ENCODE measurements at regions of chr5 and their contacts with region 1.

Region 1: DNA sequence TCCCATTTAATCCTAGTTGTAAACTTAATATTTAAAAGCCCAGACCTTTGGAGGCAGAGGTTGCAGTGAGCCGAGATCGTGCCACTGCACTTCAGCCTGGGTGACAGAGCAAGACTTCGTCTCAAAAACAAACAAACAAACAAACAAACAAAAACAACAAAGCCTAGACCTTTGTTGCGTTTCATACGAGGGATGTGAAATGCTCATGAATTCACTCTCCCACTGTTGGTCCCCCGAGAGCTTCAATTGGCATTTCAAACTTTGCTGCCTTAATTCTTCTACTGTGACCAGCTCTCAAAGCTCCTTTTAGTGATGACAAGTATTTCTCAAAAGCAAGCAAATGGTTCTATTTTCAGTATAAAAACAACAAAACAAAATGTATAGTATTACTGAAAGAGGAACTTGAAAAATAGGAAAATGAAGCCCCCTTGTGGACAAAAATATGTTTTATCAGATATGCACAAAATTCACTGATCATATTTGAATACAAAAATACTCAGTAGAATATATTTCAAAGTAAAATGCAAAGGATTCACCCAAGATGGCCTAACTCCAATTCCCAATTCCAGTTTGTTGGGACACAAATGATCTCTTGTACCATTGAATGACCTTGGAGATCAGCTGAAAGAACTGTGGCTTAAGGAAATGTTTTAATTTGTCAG is 140.4 kb downstream of the ESM1 start:
- DNase-seq: no peak
- H3K4me3 Mint-ChIP-seq: no peak overlapping the region
- H3K27ac Mint-ChIP-seq: no peak overlapping the region
- H3K4me1 Mint-ChIP-seq: peaks cover 3% of the 10 kb centered on the region
- H3K27me3 Mint-ChIP-seq: peaks cover 7% of the 10 kb centered on the region

Region 2: GRCh38 chr5:54363669-54364068 is 481.4 kb before region 1 on chr5:
- CTCF ChIA-PET with region 1: no interaction called
- intact Hi-C with region 1: no loop called
- DNase-seq: no peak
- H3K4me3 Mint-ChIP-seq: no peak overlapping the region
- H3K27ac Mint-ChIP-seq: no peak overlapping the region
- H3K4me1 Mint-ChIP-seq: no peaks in the 10 kb centered on the region
- H3K27me3 Mint-ChIP-seq: peaks cover 20% of the 10 kb centered on the region

Region 3: DNA sequence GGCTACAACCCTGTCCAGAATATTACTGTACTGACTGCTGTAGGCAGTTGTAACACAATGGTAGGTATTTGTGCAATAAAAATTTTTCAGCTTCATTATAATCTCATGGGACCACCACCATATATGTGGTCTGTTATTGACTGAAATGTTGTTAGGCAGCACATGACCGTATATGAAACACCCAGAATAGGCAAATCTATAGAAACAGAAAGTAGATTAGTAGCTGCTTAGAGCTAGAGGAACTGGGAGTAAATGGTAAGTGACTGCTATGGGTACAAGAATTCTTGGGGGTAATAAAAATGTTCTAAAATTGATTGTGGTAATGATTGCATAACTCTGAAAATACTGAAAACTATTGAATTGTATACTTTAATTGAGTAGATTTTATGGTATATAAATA is 45.4 kb before region 1 on chr5:
- CTCF ChIA-PET with region 1: no interaction called
- intact Hi-C with region 1: no loop called
- DNase-seq: no peak
- H3K4me3 Mint-ChIP-seq: no peak overlapping the region
- H3K27ac Mint-ChIP-seq: no peak overlapping the region
- H3K4me1 Mint-ChIP-seq: peaks cover 7% of the 10 kb centered on the region
- H3K27me3 Mint-ChIP-seq: peaks cover 5% of the 10 kb centered on the region

Region 4: DNA sequence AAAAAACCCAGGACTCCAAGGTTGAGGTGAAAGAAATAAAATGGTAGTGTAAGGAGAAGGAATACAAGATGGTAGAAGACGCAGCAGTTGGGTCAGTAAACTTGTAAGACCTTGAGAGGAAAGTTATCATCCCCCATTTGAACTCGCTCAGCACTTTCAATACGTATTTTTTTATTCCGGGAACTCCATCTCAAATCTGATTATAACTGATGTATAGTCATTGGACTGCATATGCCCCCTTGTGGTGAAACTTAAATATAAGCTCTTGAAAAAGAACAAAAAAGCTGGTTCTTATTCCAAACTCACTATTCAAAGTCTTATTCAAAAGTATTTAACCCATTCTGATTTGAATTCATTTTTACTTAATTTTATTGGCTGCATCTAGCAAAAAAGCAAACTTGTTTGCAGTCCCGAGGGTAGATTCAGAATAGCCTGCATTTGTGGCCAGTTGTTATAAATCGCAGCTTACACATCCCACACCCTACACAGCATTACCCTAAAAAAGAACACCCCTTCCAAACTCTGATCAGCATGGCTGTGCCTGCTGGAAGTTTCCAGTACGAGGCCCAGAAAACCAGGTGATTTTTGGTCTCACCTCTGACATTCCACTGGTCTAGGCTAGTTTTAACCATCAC is 22.4 kb after region 1 on chr5:
- CTCF ChIA-PET with region 1: interaction called, 12 read pairs
- intact Hi-C with region 1: loop called (anchors 1 kb)
- DNase-seq: no peak
- H3K4me3 Mint-ChIP-seq: no peak overlapping the region
- H3K27ac Mint-ChIP-seq: no peak overlapping the region
- H3K4me1 Mint-ChIP-seq: peaks cover 16% of the 10 kb centered on the region
- H3K27me3 Mint-ChIP-seq: peaks cover 11% of the 10 kb centered on the region

Region 5: GRCh38 chr5:54959673-54960418 is 114.8 kb after region 1 on chr5:
- CTCF ChIA-PET with region 1: no interaction called
- intact Hi-C with region 1: no loop called
- DNase-seq: peak; percentile 65
- H3K4me3 Mint-ChIP-seq: no peak overlapping the region
- H3K27ac Mint-ChIP-seq: no peak overlapping the region
- H3K4me1 Mint-ChIP-seq: no peaks in the 10 kb centered on the region
- H3K27me3 Mint-ChIP-seq: peaks cover 2% of the 10 kb centered on the region